ENCODE measurements at regions of chr20 and their contacts with region 1.

Region 1: DNA sequence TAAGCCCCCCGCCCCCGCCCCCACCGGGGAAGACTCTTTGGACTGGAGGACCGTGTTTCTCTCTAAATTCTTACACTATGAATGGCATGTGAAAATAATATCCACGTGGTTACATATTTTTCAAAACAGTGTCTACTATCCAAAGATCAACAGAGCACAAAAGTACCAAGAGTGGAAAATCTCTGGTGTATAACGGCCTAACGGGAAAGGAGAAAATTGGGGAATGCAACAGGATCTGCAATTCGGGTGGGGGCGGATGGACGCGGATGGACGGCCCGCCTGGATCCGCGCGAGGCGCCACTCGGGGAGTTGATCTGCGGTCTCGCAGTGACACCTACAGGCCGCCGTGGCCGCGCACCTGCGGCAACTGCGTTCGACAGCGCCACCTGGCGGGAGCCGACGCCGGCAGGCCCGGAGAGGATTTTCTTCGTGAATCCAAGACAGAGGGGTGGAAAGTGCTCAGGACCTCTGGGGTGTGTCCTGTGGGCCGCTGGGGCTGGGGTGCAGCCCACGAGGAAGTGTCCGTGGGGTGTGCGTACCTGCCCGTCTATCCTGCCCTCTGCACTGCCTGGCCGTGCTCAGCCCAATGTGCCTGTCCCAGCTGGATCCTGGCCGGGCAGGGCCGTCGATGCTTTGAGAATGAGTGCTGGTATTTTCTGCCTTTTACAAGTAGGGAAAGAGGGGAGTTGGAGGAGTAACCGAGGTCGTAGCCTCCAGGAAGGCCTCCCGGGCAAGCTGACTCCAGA is 18.6 kb downstream of the ANKRD60 start:
- DNase-seq: peak; percentile 80
- H3K4me3 Mint-ChIP-seq: no peak overlapping the region
- H3K27ac Mint-ChIP-seq: peak overlapping the region; percentile 43
- H3K4me1 Mint-ChIP-seq: peaks cover 7% of the 10 kb centered on the region
- H3K27me3 Mint-ChIP-seq: peaks cover 25% of the 10 kb centered on the region

Region 2: DNA sequence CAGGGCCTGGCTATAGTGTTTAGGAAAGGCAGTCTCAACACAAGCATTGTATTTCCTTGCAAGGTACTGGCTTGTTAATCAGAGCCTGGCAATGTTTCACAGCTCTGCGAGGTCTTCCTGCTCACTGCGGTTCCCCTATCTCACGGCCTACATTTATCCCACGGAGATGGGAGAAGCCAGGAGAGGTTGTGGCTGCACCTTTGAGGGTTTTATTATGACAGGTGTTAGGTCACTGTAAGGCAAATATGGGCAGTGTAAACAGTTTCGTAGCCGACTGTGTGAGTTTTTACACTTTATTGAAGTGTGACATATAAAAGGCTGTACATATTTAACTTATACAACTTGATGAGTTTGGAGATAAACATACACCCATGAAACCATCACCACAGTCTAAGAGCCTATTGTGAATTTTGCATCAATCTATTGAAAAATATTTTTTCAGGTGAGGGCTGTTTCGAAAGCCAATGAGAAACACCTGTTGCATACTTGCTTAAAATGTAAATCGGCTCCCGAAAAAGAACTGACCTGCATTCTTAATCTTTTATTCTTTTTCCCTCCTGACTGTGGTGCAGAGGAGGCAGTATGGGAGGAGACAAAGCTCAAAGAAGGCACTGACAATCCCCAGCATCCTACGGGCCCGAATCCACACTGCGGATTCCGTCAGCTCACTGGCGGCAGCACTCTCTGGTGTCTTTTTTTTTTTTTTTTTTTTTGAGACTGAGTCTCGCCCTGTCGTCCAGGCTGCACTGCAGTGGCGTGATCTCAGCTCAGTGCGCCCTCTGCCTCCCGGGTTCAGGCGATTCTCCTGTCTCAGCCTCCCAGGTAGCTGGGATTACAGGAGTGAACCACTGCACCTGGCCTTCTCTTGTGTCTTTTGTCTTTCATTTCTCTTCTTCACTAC is 826.1 kb before region 1 on chr20:
- intact Hi-C with region 1: loop called (anchors 5 kb)
- DNase-seq: no peak
- H3K4me3 Mint-ChIP-seq: no peak overlapping the region
- H3K27ac Mint-ChIP-seq: no peak overlapping the region
- H3K4me1 Mint-ChIP-seq: peaks cover 14% of the 10 kb centered on the region
- H3K27me3 Mint-ChIP-seq: no peaks in the 10 kb centered on the region

Region 3: DNA sequence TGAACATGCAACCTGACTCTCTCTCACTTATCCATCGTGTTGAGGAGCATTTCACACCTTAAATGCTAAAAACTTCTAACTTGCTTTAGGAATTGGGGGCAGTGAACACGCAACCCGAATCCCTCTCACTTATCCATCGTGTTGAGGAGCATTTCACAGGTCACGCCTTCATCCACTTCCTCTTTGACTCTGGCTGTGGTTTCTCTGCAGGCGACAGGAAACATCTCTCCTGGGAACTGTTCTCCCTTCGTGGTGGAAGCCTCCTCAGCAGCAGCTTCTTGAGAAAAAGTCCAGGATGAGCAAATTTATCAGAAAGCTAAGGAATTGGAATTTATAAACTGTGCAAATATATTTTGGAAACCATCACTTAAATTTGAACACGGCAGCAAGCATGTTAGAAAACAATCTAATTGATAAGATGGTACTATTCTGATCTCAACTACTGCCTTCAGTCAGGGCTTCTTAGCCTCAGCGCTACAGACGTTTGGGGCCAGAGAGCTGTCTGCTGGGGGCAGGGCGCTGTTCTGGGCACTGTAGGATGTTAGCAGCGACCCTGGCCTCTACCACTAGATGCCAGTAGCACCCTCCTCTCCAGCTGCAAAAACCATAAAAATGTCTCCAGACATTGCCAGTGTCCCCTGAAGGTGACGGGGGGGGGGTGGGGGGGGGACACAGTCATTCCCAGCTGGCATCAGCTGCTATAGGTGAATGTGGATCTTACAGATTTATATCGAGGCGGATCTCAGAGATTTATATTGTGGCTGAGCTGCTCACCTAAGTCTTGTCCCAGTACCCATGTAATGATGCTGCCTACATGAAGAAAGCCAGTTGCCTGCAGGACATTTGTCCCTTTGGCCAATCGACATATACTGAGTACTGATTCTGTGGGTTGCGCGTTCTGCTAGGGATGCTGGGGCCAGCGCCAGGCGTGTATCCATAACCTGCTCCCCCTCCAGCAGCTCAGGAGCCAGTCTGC is 711.1 kb before region 1 on chr20:
- intact Hi-C with region 1: loop called (anchors 10 kb)
- DNase-seq: no peak
- H3K4me3 Mint-ChIP-seq: no peak overlapping the region
- H3K27ac Mint-ChIP-seq: no peak overlapping the region
- H3K4me1 Mint-ChIP-seq: peaks cover 13% of the 10 kb centered on the region
- H3K27me3 Mint-ChIP-seq: peaks cover 39% of the 10 kb centered on the region

Region 4: DNA sequence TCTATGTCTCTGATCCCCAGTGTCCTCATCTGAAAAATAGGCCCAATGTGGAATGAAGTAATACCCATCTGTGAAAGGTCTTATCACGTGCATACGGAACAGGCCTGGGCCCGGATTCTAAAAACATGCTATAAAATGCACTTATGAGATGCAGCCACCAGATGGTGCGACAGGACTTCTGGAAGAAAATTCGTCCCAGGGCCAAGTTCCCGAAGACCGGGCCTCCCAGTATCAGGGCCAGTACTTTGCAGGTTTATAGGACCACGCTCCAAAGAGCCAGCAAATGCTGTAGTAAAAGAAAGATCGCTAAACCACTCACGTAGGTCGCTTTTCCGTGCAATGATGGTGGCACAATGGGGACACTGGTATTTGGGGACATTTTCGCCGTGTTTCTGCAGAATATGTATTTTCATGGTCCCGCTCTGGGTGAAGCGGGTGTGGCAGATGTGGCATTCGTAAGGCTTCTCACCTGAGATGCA is 695.5 kb before region 1 on chr20:
- intact Hi-C with region 1: loop called (anchors 1 kb)
- DNase-seq: peak; percentile 6
- H3K4me3 Mint-ChIP-seq: no peak overlapping the region
- H3K27ac Mint-ChIP-seq: no peak overlapping the region
- H3K4me1 Mint-ChIP-seq: no peaks in the 10 kb centered on the region
- H3K27me3 Mint-ChIP-seq: peaks cover 22% of the 10 kb centered on the region

Region 5: GRCh38 chr20:57654363-57654997 is 555.3 kb before region 1 on chr20:
- intact Hi-C with region 1: loop called (anchors 1 kb)
- DNase-seq: peak; percentile 23
- H3K4me3 Mint-ChIP-seq: no peak overlapping the region
- H3K27ac Mint-ChIP-seq: no peak overlapping the region
- H3K4me1 Mint-ChIP-seq: peaks cover 8% of the 10 kb centered on the region
- H3K27me3 Mint-ChIP-seq: peaks cover 2% of the 10 kb centered on the region

Region 6: GRCh38 chr20:58192567-58192966 is 17.3 kb before region 1 on chr20:
- intact Hi-C with region 1: loop called (anchors 2 kb)
- DNase-seq: no peak
- H3K4me3 Mint-ChIP-seq: no peak overlapping the region
- H3K27ac Mint-ChIP-seq: no peak overlapping the region
- H3K4me1 Mint-ChIP-seq: peaks cover 5% of the 10 kb centered on the region
- H3K27me3 Mint-ChIP-seq: peaks cover 17% of the 10 kb centered on the region